Kidney (tissue), 22 donors: ENCODE measurements at regions of chr14 and their contacts with region 1.

Region 1: DNA sequence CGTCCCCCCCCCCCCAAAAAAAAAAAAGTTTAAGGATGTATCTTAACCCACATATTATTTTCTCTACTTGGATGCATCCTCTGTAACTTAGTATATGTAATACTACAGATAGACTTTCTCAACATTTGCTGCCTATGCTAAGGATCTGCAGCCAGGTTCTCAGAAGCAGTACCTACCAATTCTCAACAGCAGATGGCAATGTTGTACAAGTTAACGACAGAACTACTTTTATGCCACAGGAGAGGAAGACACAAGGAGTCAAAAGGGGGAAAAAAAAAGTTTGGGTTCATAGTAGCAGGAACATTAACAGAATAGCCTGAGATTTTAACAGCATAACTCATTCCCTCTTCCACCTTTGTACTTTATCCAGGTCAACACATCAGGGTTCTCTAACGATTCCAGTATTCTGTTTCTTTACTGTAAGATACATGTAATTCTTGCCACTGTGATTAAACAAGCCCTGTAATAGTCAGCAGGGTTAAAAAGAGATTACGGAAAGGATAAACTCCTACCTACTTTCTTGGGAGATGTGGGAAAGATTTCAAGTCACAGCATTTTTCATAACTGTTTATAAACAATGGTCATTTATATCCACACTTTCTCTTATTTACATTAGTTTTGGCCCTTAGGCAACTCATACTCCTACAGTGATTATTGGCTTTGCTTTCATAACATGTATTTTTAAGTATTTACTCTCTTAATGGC is 5.7 kb upstream of the NEK9 start:
- DNase-seq: peak in 4 of 5 donors; percentile 52 to 92 (median 79)
- H3K4me3 ChIP-seq: no peak overlapping the region
- H3K27ac ChIP-seq: no peak overlapping the region
- H3K4me1 ChIP-seq: peaks cover 0 to 4% (median 0%) of the 10 kb centered on the region in 3 donors
- H3K27me3 ChIP-seq: no peaks in the 10 kb centered on the region
- CTCF ChIP-seq: peak; percentile 86

Region 2: GRCh38 chr14:74867673-74868072 is 264.9 kb before region 1 on chr14:
- intact Hi-C with region 1: no loop called
- DNase-seq: no peak
- H3K4me3 ChIP-seq: no peak overlapping the region
- H3K27ac ChIP-seq: no peak overlapping the region
- H3K4me1 ChIP-seq: no peaks in the 10 kb centered on the region
- H3K27me3 ChIP-seq: no peaks in the 10 kb centered on the region
- CTCF ChIP-seq: no peak

Region 3: DNA sequence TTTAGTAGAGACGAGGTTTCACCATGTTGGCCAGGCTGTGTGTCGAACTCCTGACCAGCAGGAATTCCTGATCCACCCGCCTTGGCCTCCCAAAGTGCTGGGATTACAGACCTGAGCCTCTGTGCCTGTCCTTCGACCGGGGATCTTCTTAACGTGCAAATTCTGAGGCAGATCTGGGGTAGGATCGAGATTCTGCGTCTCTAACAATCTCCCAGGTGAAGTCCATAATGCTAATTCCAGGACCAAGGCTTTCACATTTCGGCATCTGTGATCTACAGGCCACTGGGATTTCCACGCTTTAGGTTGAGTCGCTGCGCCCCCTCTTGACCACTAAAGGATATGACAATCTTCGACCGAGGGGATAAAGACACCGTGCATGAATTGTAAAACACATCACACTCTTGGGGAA is 170.9 kb after region 1 on chr14:
- intact Hi-C with region 1: loop called (anchors 5 kb)
- DNase-seq: peak in 4 of 5 donors; percentile 68 to 87 (median 80)
- H3K4me3 ChIP-seq: peak overlapping the region in 1 of 3 donors; percentile 11
- H3K27ac ChIP-seq: no peak overlapping the region
- H3K4me1 ChIP-seq: peaks cover 0 to 5% (median 0%) of the 10 kb centered on the region in 3 donors
- H3K27me3 ChIP-seq: no peaks in the 10 kb centered on the region
- CTCF ChIP-seq: peak; percentile 96

Region 4: DNA sequence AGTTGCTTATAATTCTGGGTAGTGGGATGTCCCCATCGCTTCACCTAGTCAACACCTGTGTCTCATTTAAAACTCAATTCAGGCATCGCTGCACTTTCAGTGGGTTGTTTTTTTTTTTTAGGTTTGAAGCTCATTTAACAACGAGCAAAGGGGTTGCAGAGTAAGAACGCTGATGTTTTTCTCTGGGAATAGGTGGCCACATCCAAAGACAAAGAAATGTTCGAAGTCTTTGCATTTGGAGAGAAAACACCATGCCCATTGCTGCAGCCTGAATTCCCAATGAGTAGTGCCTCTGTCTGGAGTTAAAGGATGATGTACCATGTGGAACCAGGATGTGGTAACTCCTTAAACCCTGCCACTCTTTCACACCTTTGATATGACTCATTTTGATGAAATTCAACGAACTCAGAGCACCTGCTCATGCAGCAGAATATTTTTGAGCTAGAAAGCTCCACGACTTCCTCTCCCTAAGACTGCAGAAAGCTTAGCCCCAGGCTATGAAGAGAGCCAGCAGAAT is 354.7 kb after region 1 on chr14:
- intact Hi-C with region 1: loop called (anchors 10 kb)
- DNase-seq: no peak
- H3K4me3 ChIP-seq: no peak overlapping the region
- H3K27ac ChIP-seq: no peak overlapping the region
- H3K4me1 ChIP-seq: peaks cover 0 to 6% (median 0%) of the 10 kb centered on the region in 3 donors
- H3K27me3 ChIP-seq: no peaks in the 10 kb centered on the region
- CTCF ChIP-seq: no peak